Psoas muscle (tissue), 8 donors: ENCODE measurements at regions of chr12 and their contacts with region 1.

Region 1: DNA sequence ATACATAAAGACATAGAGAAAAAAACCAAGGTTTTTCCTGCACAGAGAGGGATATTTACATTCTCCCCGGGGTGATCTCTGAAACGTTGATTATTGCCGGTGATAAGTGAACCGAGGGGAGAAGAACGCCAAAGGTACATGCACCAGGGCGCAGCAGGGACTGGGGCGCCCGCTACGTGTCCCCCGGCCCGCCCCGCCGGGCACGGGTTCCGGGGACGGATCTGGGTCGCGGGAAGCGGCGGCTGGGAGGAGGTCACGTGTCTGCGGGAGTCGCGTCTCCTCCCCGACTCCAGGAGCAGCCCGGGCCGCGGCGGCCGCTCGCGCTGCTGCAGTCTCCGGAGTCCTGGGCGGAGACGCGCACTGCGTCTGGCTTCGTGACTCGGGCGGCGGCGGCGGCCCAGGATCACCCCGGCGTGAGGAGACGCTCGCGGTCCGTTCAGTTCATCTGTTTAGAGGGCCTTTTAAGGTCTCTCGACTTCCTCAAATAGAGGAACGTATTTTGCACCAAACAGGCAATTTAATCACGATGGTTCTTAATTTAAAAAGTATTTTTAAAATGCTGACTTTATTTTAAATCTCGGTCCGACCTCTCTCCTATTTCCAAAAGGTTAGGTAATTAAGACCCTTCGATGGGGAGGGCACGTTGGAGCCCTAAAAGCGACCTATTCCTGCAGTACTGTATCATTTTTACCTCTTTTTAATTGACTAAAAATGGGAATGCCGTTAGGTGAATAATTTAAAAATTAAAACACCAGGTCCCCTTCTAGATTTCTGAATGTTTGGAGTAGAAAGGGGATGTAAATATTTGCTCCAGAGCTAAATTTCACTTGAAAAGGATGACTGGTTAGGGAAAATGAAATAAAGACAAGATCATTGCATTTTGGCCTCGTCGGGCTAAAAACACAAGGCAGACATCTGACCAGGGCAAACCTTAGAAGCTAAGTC is 1.8 kb upstream of the BHLHE41 start:
- DNase-seq: peak; percentile 90 to 94
- ATAC-seq: peak; percentile 69 to 75 (median 72)
- H3K4me3 ChIP-seq: peak overlapping the region; percentile 77
- H3K27ac ChIP-seq: peak overlapping the region; percentile 90
- H3K4me1 ChIP-seq: peaks cover 3% of the 10 kb centered on the region
- H3K27me3 ChIP-seq: peaks cover 0 to 4% (median 0%) of the 10 kb centered on the region in 3 donors
- CTCF ChIP-seq: peak; percentile 5

Region 2: DNA sequence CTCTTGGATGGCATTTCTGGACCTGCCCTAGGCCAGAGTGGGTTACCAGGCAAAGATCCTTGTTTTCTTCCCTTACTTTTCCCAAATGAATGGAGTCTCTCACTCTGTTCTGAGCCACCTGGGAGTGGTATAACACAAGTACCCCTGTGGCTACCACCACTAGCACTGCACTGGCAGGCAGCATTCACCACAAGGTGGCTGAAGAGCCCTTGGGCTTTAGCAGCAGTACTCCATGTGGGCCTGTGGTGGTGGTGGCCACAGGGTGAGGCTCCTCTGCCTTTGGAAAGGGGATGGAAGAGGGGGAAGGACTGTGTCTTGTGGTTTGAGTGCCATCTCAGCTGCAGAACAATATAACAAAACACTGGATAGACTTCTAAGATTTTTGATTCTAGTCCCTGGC is 535.5 kb before region 1 on chr12:
- intact Hi-C with region 1: no loop called
- DNase-seq: no peak
- ATAC-seq: no peak
- H3K4me3 ChIP-seq: no peak overlapping the region
- H3K27ac ChIP-seq: no peak overlapping the region
- H3K4me1 ChIP-seq: no peaks in the 10 kb centered on the region
- H3K27me3 ChIP-seq: no peaks in the 10 kb centered on the region
- CTCF ChIP-seq: no peak

Region 3: DNA sequence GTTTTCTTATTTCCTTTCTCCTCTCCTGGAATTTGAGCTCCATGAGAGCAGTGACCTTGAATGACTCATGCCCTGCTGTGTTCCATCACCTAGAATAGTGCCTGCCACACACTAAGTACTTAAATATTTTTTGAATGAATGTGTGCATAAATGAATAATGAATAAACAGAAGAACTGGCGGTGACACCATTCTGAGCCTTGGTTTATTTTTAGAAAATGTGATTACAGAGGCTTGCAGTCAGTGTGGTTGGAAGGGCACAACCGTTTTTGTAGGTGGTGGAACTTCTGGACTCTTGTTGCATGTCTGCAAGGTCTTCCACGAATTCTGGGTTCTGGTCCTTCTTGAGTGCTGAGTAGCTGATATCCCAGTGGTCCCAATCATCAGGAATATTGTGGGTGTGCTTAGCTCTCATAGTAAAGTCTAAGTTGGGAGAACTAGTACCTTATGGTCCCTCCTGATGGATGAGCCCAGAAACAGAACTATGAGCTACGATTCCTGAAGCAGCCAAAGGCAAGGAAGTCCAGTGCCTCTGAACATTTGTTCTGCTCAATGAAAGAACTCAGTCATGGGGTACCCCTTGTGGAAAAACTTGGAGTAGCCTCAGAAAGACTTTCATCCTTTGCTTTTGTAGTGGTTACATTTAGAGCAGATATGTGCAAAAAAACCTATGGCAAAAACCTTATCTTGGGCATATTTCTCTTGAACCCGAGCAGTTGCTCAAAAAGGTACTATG is 27.0 kb after region 1 on chr12:
- intact Hi-C with region 1: loop called in 1 of 2 experiments (anchors 2 kb)
- DNase-seq: no peak
- ATAC-seq: peak; percentile 94 to 96 (median 96)
- H3K4me3 ChIP-seq: no peak overlapping the region
- H3K27ac ChIP-seq: peak overlapping the region; percentile 67
- H3K4me1 ChIP-seq: peaks cover 14% of the 10 kb centered on the region
- H3K27me3 ChIP-seq: no peaks in the 10 kb centered on the region
- CTCF ChIP-seq: no peak

Region 4: DNA sequence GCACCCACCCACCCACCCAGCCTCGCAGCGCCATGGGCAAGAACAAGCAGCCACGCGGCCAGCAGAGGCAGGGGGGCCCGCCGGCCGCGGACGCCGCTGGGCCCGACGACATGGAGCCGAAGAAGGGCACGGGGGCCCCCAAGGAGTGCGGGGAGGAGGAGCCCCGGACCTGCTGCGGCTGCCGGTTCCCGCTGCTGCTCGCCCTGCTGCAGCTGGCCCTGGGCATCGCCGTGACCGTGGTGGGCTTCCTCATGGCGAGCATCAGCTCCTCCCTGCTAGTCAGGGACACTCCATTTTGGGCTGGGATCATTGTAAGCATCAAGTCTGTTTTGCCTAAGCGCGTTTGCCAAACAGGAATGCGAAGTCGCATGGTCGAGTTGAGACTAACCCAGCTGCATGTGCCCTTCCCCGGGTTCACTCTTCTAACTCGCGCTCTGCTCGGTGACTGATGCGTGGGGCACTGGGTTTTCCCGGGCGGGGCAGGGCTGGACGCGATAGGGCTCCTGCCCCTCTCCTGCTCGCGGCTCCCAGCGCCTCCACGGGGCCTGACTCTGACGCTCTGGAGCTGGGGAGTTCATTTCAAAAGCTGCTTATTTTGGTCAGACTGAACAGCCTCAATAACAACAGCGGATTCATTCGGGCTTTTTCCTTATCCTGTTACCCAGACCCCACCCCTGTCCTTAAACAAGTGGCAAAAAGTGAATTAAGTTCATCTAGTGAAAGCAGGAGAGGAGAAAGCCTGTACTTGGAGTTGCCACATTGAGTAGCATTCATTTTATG is 69.2 kb after region 1 on chr12:
- intact Hi-C with region 1: loop called (anchors 2 to 5 kb)
- DNase-seq: peak; percentile 59 to 78
- ATAC-seq: peak; percentile 82 to 88 (median 85)
- H3K4me3 ChIP-seq: peak overlapping the region; percentile 82
- H3K27ac ChIP-seq: peak overlapping the region; percentile 89
- H3K4me1 ChIP-seq: peaks cover 28% of the 10 kb centered on the region
- H3K27me3 ChIP-seq: no peaks in the 10 kb centered on the region
- CTCF ChIP-seq: no peak

Region 5: DNA sequence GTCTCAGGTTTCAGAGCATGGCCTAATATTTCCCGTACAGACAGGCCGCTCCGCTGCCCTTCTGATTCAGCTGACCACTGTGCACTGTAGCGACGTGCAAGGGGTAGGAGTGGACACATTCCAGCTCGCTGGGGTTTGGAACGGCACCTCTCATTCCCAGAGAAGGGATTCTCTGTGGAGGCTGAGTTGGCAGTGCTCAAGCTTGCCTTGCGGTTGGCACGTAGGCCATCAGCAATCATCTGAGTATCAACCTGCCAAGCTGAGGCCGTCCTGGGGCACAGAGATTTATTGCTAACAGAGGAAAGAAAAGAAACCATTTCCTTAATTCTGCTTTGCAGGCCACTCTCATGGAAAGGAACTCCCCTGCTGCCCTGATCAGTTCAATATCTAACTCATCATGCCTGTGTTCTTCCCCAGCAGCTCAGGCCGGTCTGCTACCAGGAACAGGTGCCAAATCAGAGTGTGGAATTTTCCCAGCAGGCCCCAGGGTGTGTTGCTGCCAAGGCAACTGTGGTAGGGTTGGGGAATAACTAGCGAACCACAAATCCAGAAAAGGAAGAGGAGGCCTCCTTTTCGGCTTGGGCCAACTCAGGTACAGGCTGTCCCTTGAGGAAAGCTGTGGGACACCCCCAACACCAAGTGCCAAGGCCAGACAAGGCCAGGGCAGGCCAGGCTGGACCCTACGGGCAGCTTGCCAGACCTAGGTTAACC is 161.2 kb after region 1 on chr12:
- intact Hi-C with region 1: loop called in 1 of 2 experiments (anchors 5 kb)
- DNase-seq: peak; percentile 49 to 69
- ATAC-seq: peak; percentile 77 to 93 (median 90)
- H3K4me3 ChIP-seq: peak overlapping the region; percentile 11
- H3K27ac ChIP-seq: peak overlapping the region; percentile 82
- H3K4me1 ChIP-seq: peaks cover 14% of the 10 kb centered on the region
- H3K27me3 ChIP-seq: no peaks in the 10 kb centered on the region
- CTCF ChIP-seq: no peak

Region 6: GRCh38 chr12:26524862-26525465 is 398.4 kb after region 1 on chr12:
- intact Hi-C with region 1: loop called in 1 of 2 experiments (anchors 5 kb)
- DNase-seq: no peak
- ATAC-seq: no peak
- H3K4me3 ChIP-seq: no peak overlapping the region
- H3K27ac ChIP-seq: no peak overlapping the region
- H3K4me1 ChIP-seq: peaks cover 12% of the 10 kb centered on the region
- H3K27me3 ChIP-seq: no peaks in the 10 kb centered on the region
- CTCF ChIP-seq: peak; percentile 55